GM12878 (cell line): ENCODE measurements at regions of chr5 and their contacts with region 1.

Region 1: GRCh38 chr5:173615884-173616576 is 420 bp downstream of the BOD1 start:
- DNase-seq: peak; percentile 43
- ATAC-seq: peak; percentile 86
- H3K4me3 ChIP-seq: peak overlapping the region; percentile 66
- H3K27ac ChIP-seq: peak overlapping the region; percentile 72
- H3K4me1 ChIP-seq: peaks cover 14% of the 10 kb centered on the region
- H3K27me3 ChIP-seq: no peaks in the 10 kb centered on the region
- CTCF ChIP-seq: peak; percentile 70 to 82 (median 77)
- EP300 ChIP-seq: no peak
- POLR2A ChIP-seq: peak; percentile 73
- RAD21 ChIP-seq: peak; percentile 29; the same call in 1 of the 2 replicates

Region 2: DNA sequence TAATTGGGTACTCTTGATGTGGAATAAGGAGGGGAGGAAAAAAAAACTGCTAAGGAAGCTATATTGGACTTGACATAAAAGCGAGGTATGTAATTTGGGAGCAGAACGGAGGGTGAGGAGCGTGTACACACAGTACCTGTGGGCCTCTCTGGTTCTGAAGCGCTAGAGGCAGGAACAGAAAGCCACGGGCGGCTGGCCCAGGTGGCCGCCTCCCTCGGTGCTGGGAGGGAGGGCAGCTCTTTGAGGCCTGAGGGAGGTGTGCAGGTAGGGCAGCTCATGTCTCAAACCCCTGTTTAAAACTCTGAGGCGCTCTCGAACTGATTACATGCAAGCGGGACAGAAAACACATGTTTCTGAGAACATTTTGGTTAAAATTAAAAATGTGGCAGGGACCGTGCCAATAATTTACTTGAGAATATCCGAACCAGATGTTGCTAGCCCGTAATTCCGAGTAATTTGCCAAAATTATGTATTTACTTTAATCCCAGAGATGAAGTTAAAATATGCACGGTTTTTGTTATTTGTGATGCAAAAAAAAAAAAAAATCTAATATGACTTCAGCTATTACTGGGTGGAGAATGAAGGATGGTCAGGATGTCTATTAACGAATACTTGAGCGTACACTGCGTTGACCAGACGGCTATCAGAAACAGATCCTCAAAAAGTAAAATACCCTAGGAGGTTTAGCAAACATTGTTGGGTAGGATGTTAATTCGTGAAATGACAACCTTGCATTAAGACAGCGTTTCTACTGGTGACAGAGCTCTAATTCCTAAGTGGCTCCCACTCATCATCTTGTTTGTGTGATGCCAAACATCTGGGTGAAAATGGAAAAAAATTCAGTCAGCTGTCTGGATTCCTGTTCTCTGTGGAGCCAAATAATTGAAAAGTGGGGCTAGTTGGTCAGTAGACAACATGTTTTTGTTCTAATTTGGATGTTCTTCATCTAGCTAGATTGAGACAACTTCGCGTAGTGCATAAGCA is 263.4 kb before region 1 on chr5:
- CTCF ChIA-PET with region 1: no interaction called
- POLR2A ChIA-PET with region 1: no interaction called
- RAD21 ChIA-PET with region 1: no interaction called
- SMC1A ChIA-PET with region 1: no interaction called
- in situ Hi-C with region 1: no loop called
- intact Hi-C with region 1: no loop called
- DNase-seq: no peak
- ATAC-seq: no peak
- H3K4me3 ChIP-seq: no peak overlapping the region
- H3K27ac ChIP-seq: no peak overlapping the region
- H3K4me1 ChIP-seq: no peaks in the 10 kb centered on the region
- H3K27me3 ChIP-seq: peaks cover 0 to 1% of the 10 kb centered on the region in 2 experiments; a peak in 1 of 4 replicates
- CTCF ChIP-seq: no peak
- EP300 ChIP-seq: no peak
- POLR2A ChIP-seq: no peak
- RAD21 ChIP-seq: no peak

Region 3: GRCh38 chr5:173371400-173371799 is 244.6 kb before region 1 on chr5:
- CTCF ChIA-PET with region 1: no interaction called
- POLR2A ChIA-PET with region 1: no interaction called
- RAD21 ChIA-PET with region 1: no interaction called
- SMC1A ChIA-PET with region 1: no interaction called
- in situ Hi-C with region 1: no loop called
- intact Hi-C with region 1: no loop called
- DNase-seq: no peak
- ATAC-seq: no peak
- H3K4me3 ChIP-seq: no peak overlapping the region
- H3K27ac ChIP-seq: no peak overlapping the region
- H3K4me1 ChIP-seq: no peaks in the 10 kb centered on the region
- H3K27me3 ChIP-seq: no peaks in the 10 kb centered on the region; a peak in 1 of 4 replicates
- CTCF ChIP-seq: no peak
- EP300 ChIP-seq: no peak
- POLR2A ChIP-seq: no peak
- RAD21 ChIP-seq: no peak

Region 4: DNA sequence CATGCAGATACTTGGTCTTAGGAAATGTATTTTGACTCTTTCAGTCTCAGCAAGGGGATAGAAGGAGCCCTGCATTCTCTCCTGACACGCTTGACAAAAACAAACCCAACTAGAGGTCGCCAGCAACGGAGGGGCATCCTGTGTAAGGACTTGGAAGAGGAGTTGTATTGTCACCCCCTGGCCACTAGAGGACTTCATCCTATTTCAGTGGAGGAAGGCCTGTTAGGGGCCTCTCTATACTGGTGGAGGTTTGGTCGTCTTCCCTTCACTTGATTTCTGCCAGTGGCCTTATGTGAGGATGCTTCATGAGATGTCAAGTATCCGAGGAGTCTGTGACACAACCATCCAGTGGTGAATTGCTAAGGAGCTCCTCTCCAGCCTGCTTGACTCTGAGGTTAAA is 165.0 kb before region 1 on chr5:
- CTCF ChIA-PET with region 1: no interaction called
- POLR2A ChIA-PET with region 1: no interaction called
- RAD21 ChIA-PET with region 1: no interaction called
- SMC1A ChIA-PET with region 1: no interaction called
- in situ Hi-C with region 1: no loop called
- intact Hi-C with region 1: no loop called
- DNase-seq: no peak
- ATAC-seq: peak; percentile 82
- H3K4me3 ChIP-seq: no peak overlapping the region
- H3K27ac ChIP-seq: no peak overlapping the region
- H3K4me1 ChIP-seq: no peaks in the 10 kb centered on the region
- H3K27me3 ChIP-seq: no peaks in the 10 kb centered on the region
- CTCF ChIP-seq: peak; percentile 51 to 75 (median 69)
- EP300 ChIP-seq: no peak
- POLR2A ChIP-seq: no peak
- RAD21 ChIP-seq: peak; percentile 54

Region 5: GRCh38 chr5:173581408-173582215 is 34.4 kb before region 1 on chr5:
- CTCF ChIA-PET with region 1: interaction called, 14 read pairs
- POLR2A ChIA-PET with region 1: no interaction called
- RAD21 ChIA-PET with region 1: interaction called, 3 read pairs
- SMC1A ChIA-PET with region 1: no interaction called
- in situ Hi-C with region 1: no loop called
- intact Hi-C with region 1: loop called (anchors 1 kb)
- DNase-seq: no peak
- ATAC-seq: peak; percentile 90
- H3K4me3 ChIP-seq: no peak overlapping the region
- H3K27ac ChIP-seq: no peak overlapping the region
- H3K4me1 ChIP-seq: no peaks in the 10 kb centered on the region
- H3K27me3 ChIP-seq: no peaks in the 10 kb centered on the region; a peak in 1 of 4 replicates
- CTCF ChIP-seq: peak; percentile 63 to 90 (median 82)
- EP300 ChIP-seq: no peak
- POLR2A ChIP-seq: no peak
- RAD21 ChIP-seq: peak; percentile 49

Region 6: DNA sequence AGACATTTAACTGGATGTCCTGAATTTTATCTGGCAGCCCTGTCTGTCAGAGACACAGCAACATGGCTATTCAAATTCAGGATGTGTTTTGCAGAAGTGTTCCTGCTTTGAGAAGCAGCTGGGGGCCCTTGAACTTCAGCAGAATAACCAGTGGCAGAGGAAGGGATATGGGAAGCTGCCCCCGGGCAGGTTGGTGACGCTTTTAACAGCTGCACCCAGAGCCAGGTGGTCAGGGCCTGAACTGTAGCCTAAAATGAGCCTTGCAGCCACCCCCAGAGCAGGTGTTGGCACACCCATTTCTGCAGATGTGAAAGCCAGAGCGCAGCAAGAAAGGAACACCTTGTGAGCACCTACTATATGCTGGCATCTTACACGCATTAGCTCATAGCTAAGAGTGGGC is 129.1 kb after region 1 on chr5:
- CTCF ChIA-PET with region 1: no interaction called
- POLR2A ChIA-PET with region 1: interaction called, 4 read pairs
- RAD21 ChIA-PET with region 1: interaction called, 3 read pairs
- SMC1A ChIA-PET with region 1: interaction called, 5 read pairs
- in situ Hi-C with region 1: no loop called
- intact Hi-C with region 1: loop called (anchors 2 kb)
- DNase-seq: peak; percentile 47
- ATAC-seq: peak; percentile 64
- H3K4me3 ChIP-seq: no peak overlapping the region
- H3K27ac ChIP-seq: peak overlapping the region; percentile 95
- H3K4me1 ChIP-seq: peaks cover 54% of the 10 kb centered on the region
- H3K27me3 ChIP-seq: no peaks in the 10 kb centered on the region
- CTCF ChIP-seq: no peak
- EP300 ChIP-seq: no peak; a peak in 1 of 4 replicates
- POLR2A ChIP-seq: no peak
- RAD21 ChIP-seq: 0 out of 2 replicates have a peak, but pooled peaks have one; percentile 0

Region 7: DNA sequence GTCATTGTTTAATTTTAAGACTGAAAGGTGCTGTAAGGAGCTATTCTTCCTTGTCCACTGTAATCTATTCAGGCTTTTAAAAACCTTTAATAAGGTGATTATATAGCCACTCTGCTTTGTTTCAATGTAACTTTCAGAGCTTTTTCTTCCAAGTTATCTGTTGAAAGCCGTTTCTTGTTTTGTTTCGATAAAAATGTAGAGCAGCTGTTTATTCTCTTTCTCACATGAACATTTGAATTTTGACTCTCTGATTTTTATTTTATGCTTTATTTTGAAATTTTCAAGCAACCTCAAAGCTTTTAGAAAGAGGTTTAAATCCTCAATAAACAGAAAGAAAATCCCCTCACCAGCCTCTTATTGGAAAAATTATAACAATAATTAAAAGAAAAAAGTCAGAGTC is 319.4 kb after region 1 on chr5:
- CTCF ChIA-PET with region 1: interaction called, 267 read pairs
- POLR2A ChIA-PET with region 1: no interaction called
- RAD21 ChIA-PET with region 1: interaction called, 7 read pairs
- SMC1A ChIA-PET with region 1: interaction called, 199 read pairs
- in situ Hi-C with region 1: no loop called
- intact Hi-C with region 1: no loop called
- DNase-seq: no peak
- ATAC-seq: no peak
- H3K4me3 ChIP-seq: no peak overlapping the region
- H3K27ac ChIP-seq: no peak overlapping the region
- H3K4me1 ChIP-seq: no peaks in the 10 kb centered on the region
- H3K27me3 ChIP-seq: no peaks in the 10 kb centered on the region
- CTCF ChIP-seq: no peak
- EP300 ChIP-seq: no peak
- POLR2A ChIP-seq: no peak
- RAD21 ChIP-seq: no peak

Region 8: DNA sequence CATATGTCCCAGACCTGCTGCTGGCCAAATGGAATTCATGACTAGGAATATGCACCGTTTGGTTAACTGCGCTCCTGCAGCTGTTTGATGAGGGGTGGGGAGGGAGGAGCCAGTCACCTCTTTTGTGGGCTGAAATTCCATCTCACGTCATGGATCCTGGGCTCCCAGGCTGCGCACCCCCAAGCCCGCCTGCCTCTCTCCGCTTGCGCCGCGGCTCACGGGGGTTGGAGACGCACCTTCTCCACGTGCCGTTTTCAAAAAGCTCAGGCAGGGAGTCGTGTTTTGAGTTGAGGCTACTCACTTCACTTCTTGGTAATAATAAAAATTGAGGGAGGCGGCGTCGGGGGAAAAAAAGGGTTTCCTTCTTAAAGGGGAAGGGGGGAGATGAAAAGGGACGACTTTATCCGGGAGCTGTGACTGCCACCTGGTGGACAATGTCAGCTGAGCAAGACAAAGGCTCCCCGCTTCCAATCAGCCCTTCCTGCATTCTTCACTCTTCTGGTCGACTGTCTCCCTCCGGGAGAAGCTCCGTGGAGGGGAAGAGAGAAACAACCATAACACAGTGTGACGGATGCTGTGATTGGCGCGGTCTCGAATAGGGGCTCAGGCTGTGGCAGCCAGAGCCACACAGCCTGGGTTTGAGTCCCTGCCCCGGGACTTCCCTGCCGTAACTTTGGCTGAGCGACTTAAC is 357.0 kb after region 1 on chr5:
- CTCF ChIA-PET with region 1: interaction called, 242 read pairs
- POLR2A ChIA-PET with region 1: interaction called, 5 read pairs
- RAD21 ChIA-PET with region 1: interaction called, 90 read pairs
- SMC1A ChIA-PET with region 1: interaction called, 171 read pairs
- in situ Hi-C with region 1: loop called (anchors 5 kb)
- intact Hi-C with region 1: loop called (anchors 1 kb)
- DNase-seq: peak; percentile 40
- ATAC-seq: peak; percentile 92
- H3K4me3 ChIP-seq: peak overlapping the region; percentile 66
- H3K27ac ChIP-seq: no peak overlapping the region
- H3K4me1 ChIP-seq: peaks cover 12% of the 10 kb centered on the region
- H3K27me3 ChIP-seq: no peaks in the 10 kb centered on the region
- CTCF ChIP-seq: peak; percentile 77 to 88 (median 82); a peak in 5 of 6 replicates
- EP300 ChIP-seq: no peak
- POLR2A ChIP-seq: no peak
- RAD21 ChIP-seq: peak; percentile 84

Region 9: DNA sequence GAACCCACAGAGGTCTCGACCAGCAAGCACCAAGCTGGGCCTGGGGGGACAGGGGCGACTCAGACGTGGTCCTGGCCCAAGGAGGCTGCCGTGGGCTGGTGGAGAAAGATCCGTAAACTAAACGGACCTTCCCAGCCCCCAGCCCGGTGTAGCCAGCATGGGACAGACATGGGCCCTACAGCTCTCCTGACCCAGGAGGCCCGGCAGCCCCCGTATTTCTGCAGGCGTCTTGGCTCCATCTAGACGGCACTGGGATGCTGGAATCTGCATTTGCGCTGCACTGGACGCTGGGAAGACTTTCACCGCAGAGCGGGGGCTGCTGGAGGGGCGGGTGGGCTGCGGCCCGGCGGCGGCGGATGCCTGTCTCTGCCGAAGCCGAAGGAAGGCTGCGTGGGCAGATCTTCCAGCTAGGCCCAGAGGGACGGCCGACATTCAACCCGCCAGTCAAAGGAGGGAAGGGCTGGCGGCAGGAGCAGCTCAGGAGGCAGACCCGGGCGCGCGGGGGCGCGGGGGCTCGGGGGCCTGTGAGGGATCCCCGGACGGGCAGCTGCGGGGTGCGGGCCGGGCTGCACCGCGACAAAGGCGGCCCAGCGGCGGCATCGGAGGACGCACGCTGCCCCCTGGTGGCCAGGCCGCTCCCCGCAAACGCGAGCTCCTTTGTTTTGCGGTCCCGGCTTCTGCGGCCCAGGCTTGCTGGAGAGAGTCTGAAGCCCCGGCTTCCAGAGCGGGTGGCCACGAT is 695.7 kb after region 1 on chr5:
- CTCF ChIA-PET with region 1: interaction called, 7 read pairs
- POLR2A ChIA-PET with region 1: interaction called, 4 read pairs
- RAD21 ChIA-PET with region 1: interaction called, 5 read pairs
- SMC1A ChIA-PET with region 1: interaction called, 6 read pairs
- in situ Hi-C with region 1: loop called (anchors 5 kb)
- intact Hi-C with region 1: loop called (anchors 2 kb)
- DNase-seq: no peak
- ATAC-seq: peak; percentile 97
- H3K4me3 ChIP-seq: peak overlapping the region; percentile 50; the same call in 1 of the 2 replicates
- H3K27ac ChIP-seq: no peak overlapping the region
- H3K4me1 ChIP-seq: no peaks in the 10 kb centered on the region
- H3K27me3 ChIP-seq: peaks cover 0 to 2% of the 10 kb centered on the region in 2 experiments; a peak in 2 of 4 replicates
- CTCF ChIP-seq: peak; percentile 64 to 85 (median 84)
- EP300 ChIP-seq: no peak
- POLR2A ChIP-seq: no peak
- RAD21 ChIP-seq: peak; percentile 75